ENCODE measurements at regions of chr3 and their contacts with region 1.

Region 1: DNA sequence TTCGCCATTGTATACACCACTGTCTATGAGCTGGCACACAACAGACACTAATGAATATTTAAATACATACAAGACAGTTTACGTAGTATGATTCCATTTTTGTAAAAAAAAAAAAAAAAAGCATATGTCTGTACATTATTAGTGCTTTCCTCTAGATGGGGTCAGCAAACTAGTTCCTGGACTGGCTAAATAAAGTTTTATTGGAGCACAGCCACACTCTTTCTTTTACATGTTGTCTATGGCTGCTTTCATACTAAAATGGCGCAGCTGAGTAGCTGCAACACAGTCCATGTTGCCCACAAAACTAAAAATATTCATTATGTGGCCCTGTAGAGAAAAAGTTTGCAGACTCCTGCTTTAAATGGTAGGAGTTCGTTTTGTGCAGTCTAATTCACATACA is 70.7 kb upstream of the FRMD4B start:
- DNase-seq: no peak
- H3K4me3 ChIP-seq: no peak overlapping the region
- H3K27ac ChIP-seq: no peak overlapping the region
- H3K4me1 ChIP-seq: peaks cover 1% of the 10 kb centered on the region
- H3K27me3 ChIP-seq: no peaks in the 10 kb centered on the region
- CTCF ChIP-seq: no peak
- EP300 ChIP-seq: no peak
- POLR2A ChIP-seq: no peak

Region 2: GRCh38 chr3:69491975-69492374 is 35.3 kb after region 1 on chr3:
- intact Hi-C with region 1: loop called in 1 of 4 experiments (anchors 1 kb)
- DNase-seq: no peak
- H3K4me3 ChIP-seq: no peak overlapping the region
- H3K27ac ChIP-seq: no peak overlapping the region
- H3K4me1 ChIP-seq: no peaks in the 10 kb centered on the region
- H3K27me3 ChIP-seq: no peaks in the 10 kb centered on the region
- CTCF ChIP-seq: no peak
- EP300 ChIP-seq: no peak
- POLR2A ChIP-seq: no peak

Measured in ovary (tissue), 10 donors.